Panc1 (cell line): ENCODE measurements at regions of chr15 and their contacts with region 1.

Region 1: GRCh38 chr15:64460206-64460734 is at the start of gene ZNF609:
- DNase-seq: peak; percentile 64
- ATAC-seq: peak; percentile 93
- H3K4me3 ChIP-seq: peak within 1 kb of the TSS; percentile 58 to 89
- H3K27ac ChIP-seq: peak within 1 kb of the TSS; percentile 89
- H3K4me1 ChIP-seq: peaks cover 38% of the 10 kb centered on the region
- H3K27me3 ChIP-seq: no peaks in the 10 kb centered on the region
- CTCF ChIP-seq: no peak
- total RNA-seq, gene ZNF609: 47.2 TPM

Region 2: DNA sequence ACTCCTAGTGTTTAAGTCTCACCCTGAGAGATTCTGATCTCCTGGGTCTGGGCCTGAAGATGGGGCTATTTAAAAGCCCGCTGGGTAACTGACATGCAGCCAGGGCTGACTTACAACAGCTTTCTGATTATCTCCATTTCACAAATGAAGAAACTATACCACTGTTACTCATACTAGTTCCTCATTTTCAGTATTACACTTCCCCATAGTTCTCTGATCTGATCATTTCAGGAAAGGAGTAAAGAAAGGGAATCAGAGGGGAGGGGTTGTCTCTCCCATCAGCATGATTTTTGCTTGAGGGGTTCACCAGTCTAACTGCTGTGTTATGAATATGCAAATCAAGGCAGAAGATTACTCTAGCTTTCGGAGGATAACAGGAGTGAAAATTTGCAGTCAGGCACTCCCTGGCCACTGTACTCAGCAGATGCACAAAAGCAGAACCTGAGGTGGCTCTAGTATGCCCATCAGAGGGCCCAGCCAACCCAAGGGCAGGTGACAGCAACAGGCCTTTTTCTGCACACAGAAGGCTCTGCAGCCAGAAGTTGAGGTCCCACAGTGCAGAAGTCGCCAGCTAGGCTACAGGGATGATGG is 473.4 kb before region 1 on chr15:
- CTCF ChIA-PET with region 1: no interaction called
- POLR2A ChIA-PET with region 1: no interaction called
- in situ Hi-C with region 1: no loop called
- intact Hi-C with region 1: no loop called
- DNase-seq: no peak
- ATAC-seq: no peak
- H3K4me3 ChIP-seq: no peak overlapping the region
- H3K27ac ChIP-seq: no peak overlapping the region
- H3K4me1 ChIP-seq: no peaks in the 10 kb centered on the region
- H3K27me3 ChIP-seq: no peaks in the 10 kb centered on the region
- CTCF ChIP-seq: no peak

Region 3: DNA sequence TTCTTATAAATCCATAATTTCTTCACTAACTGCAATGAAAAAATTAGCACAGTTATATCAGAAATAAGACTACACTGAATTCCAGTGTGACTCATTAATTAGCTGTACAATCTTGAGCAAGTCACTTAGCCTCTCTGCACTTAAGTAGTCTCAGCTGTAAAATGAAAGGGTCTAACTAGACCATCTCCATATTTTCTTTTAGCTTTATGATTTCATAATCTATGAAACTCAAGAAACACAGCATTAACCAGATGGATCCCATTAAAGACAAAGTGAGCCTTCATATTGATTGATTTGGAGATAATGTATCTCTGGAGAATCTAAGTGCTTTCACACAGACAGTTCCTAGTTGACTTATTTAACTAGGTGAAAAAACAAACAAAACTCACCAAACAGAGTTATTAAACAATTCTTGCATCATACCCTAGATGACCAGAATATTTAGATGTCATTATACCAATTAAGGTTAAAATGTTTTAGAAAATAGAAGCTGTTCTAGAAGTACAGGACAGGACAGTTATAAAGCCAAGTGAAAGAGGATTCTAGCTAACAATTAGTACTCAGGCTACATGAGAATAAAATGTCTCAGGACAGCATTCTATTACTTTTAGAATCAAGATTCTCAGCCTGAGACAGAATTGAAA is 115.5 kb before region 1 on chr15:
- CTCF ChIA-PET with region 1: no interaction called
- POLR2A ChIA-PET with region 1: no interaction called
- in situ Hi-C with region 1: no loop called
- intact Hi-C with region 1: no loop called
- DNase-seq: no peak
- ATAC-seq: no peak
- H3K4me3 ChIP-seq: no peak overlapping the region
- H3K27ac ChIP-seq: peak overlapping the region; percentile 9; the same call in 1 of the 2 replicates
- H3K4me1 ChIP-seq: peaks cover 8% of the 10 kb centered on the region; the same call in 1 of the 2 replicates
- H3K27me3 ChIP-seq: no peaks in the 10 kb centered on the region
- CTCF ChIP-seq: no peak

Region 4: DNA sequence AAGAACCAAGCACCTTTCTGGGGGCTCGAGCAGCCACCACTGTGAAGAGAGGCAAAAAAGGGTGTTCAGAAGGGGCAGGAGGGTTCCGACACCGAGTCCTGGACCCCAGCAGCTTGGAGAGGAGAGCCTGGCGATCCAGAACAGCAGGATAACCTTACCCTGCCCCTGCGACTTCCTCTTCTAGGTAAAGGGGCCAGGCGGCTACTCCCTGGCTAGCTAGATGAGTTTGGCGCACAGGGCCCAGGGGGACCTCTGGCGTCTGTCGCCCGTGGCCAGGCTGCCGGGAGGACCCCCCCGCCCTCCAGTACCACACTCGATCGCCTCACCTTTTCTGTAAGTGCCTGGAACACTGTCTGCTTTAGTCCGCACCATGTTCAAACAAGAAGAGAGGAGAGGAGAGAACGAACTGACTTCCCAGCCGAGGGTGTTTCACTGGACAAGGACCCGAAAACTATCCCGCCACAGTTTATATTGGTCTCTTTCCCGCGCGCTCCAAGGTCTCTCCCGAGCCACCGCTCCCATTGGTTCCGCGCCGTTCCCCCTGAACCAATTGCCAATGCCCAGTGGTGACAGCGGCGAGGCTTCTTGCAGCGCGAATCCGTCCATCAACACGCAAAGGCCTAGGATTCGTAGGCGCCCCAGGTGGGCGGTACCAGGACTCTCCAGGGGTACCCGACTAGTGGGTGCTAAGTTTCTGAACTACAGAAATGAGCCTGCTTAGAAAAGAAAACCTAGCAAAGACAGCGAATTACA is 79.1 kb before region 1 on chr15 and contains the start of gene PCLAF:
- CTCF ChIA-PET with region 1: interaction called, 10 read pairs
- POLR2A ChIA-PET with region 1: no interaction called
- in situ Hi-C with region 1: no loop called
- intact Hi-C with region 1: no loop called
- DNase-seq: peak; percentile 83
- ATAC-seq: peak; percentile 98
- H3K4me3 ChIP-seq: peak within 1 kb of the TSS; percentile 68 to 85
- H3K27ac ChIP-seq: peak within 1 kb of the TSS; percentile 91
- H3K4me1 ChIP-seq: peaks cover 11% of the 10 kb centered on the region
- H3K27me3 ChIP-seq: no peaks in the 10 kb centered on the region
- CTCF ChIP-seq: no peak
- total RNA-seq, gene PCLAF: 97.8 TPM

Region 5: GRCh38 chr15:64430000-64430735 is 30.1 kb before region 1 on chr15:
- CTCF ChIA-PET with region 1: no interaction called
- POLR2A ChIA-PET with region 1: no interaction called
- in situ Hi-C with region 1: no loop called
- intact Hi-C with region 1: no loop called
- DNase-seq: no peak
- ATAC-seq: no peak
- H3K4me3 ChIP-seq: no peak overlapping the region
- H3K27ac ChIP-seq: no peak overlapping the region
- H3K4me1 ChIP-seq: no peaks in the 10 kb centered on the region
- H3K27me3 ChIP-seq: no peaks in the 10 kb centered on the region
- CTCF ChIP-seq: no peak

Region 6: GRCh38 chr15:65666257-65666656 is 1206.0 kb after region 1 on chr15:
- CTCF ChIA-PET with region 1: no interaction called
- POLR2A ChIA-PET with region 1: no interaction called
- in situ Hi-C with region 1: no loop called
- intact Hi-C with region 1: no loop called
- DNase-seq: no peak
- ATAC-seq: no peak
- H3K4me3 ChIP-seq: no peak overlapping the region
- H3K27ac ChIP-seq: no peak overlapping the region
- H3K4me1 ChIP-seq: no peaks in the 10 kb centered on the region
- H3K27me3 ChIP-seq: no peaks in the 10 kb centered on the region
- CTCF ChIP-seq: no peak